ENCODE measurements at regions of chr2 and their contacts with region 1.

Region 1: DNA sequence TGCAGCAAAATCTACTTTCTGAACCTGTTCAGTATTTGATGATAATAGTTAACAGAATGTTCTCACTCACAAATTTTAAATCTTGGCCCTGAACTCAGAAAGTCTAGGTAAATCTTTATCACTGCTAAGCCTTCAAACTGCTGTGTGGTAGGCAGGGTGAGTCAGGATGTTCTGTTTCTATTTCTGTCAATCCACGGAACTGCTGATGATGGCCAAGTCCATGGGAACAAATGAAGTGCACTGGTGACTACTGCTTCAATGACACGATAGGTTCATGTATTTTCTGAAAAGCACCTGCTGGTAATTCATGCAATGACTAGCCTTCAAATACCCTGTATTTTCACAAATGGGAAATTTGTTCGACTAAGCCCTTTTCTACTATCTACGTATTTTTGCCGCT is 14.2 kb downstream of the NIFK start:
- DNase-seq: no peak

Region 2: DNA sequence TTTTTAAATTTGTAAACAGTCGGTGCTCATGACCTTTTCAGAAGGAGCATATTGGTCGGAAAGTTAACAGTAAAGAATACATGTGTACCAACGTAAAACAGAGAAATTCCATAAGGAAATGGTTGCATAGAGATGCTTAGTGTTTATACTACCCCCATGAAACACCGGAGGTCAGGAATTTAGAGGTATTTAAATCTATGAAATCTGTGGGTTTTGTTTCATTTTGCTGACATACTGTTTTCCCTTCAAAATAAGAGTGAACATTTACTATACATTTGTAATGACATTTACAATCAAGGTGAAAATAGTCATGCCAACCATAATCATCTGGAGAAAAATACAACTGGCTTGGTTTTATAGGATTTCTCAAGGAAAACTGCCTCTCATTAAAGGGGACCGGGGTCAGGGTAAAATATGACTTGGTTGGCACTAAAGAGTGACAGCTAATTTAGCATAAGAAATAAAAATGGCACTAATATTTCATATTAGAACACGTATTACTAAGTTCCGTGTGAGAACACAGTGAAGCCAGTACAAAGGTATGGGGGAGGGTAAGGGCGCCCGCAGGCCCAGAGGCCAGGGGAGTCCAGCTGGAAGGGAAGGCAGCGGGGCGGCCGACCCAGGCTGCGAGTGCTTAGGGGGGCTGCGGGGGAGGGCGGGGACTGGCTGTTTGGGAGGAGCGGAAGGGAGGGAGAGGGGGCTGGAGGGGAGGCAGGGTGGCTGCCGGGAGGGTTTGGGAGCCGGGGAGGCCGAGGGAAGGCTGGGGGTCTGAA is 192.9 kb before region 1 on chr2:
- in situ Hi-C with region 1: loop called (anchors 10 kb)
- DNase-seq: peak; percentile 6

Region 3: GRCh38 chr2:121561617-121562268 is 160.7 kb before region 1 on chr2:
- in situ Hi-C with region 1: no loop called
- DNase-seq: no peak

Region 4: DNA sequence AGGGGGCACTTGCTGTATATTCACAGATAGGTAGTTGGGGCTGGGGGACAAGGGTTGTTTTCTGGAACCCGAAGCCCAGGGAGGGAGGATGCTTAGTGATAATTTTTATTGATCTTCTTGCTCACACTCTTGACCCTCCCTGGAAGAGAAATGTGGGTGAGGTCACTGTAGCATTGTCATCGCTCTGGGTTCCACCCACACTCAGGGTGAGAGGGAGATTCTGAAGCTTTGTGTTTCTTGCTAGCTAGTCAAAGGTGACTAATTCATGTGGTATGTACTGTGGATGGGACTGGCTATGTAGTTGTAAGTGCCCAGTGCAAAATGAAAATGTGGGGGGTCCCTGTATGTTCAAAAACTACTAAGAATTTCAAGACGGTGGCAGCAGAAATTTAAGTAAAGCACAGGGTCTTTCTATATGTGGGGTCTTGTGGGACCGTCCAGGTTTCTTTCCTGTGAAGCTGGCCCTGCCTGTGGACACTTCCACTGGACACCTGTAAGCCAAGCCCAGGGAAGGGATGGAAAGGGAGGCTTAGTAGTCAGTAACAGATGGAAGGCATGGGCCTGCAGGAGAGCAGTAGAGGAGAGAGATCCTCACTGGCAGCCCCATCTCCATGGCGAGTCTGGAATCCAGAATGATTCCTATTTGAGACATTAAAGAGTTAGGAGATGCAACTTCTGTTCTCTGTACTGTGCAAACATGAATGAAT is 67.9 kb after region 1 on chr2:
- in situ Hi-C with region 1: no loop called
- DNase-seq: peak; percentile 85

Measured in Caki2 (cell line).